ENCODE measurements at regions of chr12 and their contacts with region 1.

Region 1: DNA sequence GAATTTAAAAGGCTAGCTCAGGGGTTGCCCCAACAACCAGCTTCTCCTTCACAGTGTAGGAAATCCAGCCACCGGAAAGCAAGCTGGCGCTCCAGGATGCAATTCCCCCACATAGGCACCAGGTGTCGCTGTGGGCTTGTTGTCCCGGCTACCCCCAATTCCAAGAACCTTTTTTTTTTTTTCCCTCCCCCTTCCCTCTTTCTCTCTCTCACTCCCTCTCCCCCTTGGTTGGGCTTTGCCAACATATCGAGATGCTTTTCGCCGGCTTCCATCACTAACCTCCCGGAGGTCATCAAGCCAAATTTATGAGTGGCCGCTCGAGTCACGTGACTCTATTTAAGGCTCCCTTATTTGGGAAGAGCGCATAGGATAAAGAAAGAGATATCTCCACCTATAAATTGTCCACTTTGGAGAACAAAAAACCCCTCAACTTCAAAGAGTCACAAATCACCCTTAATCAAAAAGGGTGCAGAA is at the start of gene HOXC5:
- DNase-seq: peak; percentile 69
- H3K4me3 Mint-ChIP-seq: peak within 1 kb of the TSS; percentile 16
- H3K27ac Mint-ChIP-seq: no peak within 1 kb of the TSS
- H3K4me1 Mint-ChIP-seq: peaks cover 26% of the 10 kb centered on the region
- H3K27me3 Mint-ChIP-seq: peaks cover 85% of the 10 kb centered on the region
- total RNA-seq, gene HOXC5: not detected

Region 2: GRCh38 chr12:54005853-54006686 is 26.6 kb before region 1 on chr12:
- CTCF ChIA-PET with region 1: interaction called, 12 read pairs
- POLR2A ChIA-PET with region 1: interaction called, 4 read pairs
- DNase-seq: peak; percentile 85
- H3K4me3 Mint-ChIP-seq: peak overlapping the region; percentile 66
- H3K27ac Mint-ChIP-seq: no peak overlapping the region
- H3K4me1 Mint-ChIP-seq: peaks cover 25% of the 10 kb centered on the region
- H3K27me3 Mint-ChIP-seq: peaks cover 95% of the 10 kb centered on the region

Region 3: DNA sequence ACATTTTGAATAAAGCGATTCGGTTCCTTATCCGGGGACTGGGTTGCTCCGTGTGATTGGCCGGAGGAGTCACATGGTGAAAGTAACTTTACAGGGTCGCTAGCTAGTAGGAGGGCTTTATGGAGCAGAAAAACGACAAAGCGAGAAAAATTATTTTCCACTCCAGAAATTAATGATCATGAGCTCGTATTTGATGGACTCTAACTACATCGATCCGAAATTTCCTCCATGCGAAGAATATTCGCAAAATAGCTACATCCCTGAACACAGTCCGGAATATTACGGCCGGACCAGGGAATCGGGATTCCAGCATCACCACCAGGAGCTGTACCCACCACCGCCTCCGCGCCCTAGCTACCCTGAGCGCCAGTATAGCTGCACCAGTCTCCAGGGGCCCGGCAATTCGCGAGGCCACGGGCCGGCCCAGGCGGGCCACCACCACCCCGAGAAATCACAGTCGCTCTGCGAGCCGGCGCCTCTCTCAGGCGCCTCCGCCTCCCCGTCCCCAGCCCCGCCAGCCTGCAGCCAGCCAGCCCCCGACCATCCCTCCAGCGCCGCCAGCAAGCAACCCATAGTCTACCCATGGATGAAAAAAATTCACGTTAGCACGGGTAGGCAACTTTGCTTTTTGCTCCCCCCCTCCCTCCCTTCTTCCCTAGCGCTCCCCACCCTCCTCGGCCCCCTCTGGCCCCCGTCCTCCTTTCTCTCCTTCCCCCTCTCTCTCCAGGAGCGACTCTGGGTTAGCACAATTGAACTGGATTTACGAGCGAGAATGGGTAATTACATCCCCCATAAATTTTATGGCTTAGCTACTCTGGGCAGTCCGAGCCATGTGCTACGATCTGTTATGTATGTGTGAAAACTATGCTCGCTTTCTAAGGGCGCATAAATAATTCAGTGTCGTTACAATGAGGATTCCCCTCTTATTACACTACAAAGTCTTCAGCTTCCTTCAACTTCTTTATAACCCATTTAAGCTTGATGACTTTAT is 21.4 kb after region 1 on chr12 and contains the start of gene HOXC4:
- CTCF ChIA-PET with region 1: interaction called, 18 read pairs
- POLR2A ChIA-PET with region 1: interaction called, 4 read pairs
- DNase-seq: no peak
- H3K4me3 Mint-ChIP-seq: peak within 1 kb of the TSS; percentile 56
- H3K27ac Mint-ChIP-seq: no peak within 1 kb of the TSS
- H3K4me1 Mint-ChIP-seq: peaks cover 21% of the 10 kb centered on the region
- H3K27me3 Mint-ChIP-seq: peaks cover 91% of the 10 kb centered on the region
- total RNA-seq, gene HOXC4: 0.15 to 0.23 TPM

Region 4: GRCh38 chr12:54201001-54201794 is 168.5 kb after region 1 on chr12:
- CTCF ChIA-PET with region 1: interaction called, 107 read pairs
- POLR2A ChIA-PET with region 1: interaction called, 3 read pairs
- DNase-seq: peak; percentile 69
- H3K4me3 Mint-ChIP-seq: no peak overlapping the region
- H3K27ac Mint-ChIP-seq: no peak overlapping the region
- H3K4me1 Mint-ChIP-seq: peaks cover 4% of the 10 kb centered on the region
- H3K27me3 Mint-ChIP-seq: peaks cover 55% of the 10 kb centered on the region

Region 5: GRCh38 chr12:54214553-54215406 is 182.1 kb after region 1 on chr12:
- CTCF ChIA-PET with region 1: interaction called, 12 read pairs
- POLR2A ChIA-PET with region 1: no interaction called
- DNase-seq: peak; percentile 93
- H3K4me3 Mint-ChIP-seq: peak overlapping the region; percentile 85
- H3K27ac Mint-ChIP-seq: peak overlapping the region; percentile 68
- H3K4me1 Mint-ChIP-seq: peaks cover 47% of the 10 kb centered on the region
- H3K27me3 Mint-ChIP-seq: peaks cover 22% of the 10 kb centered on the region

Measured in activated CD4-positive, alpha-beta memory T cell treated with anti-CD3 and anti-CD28 coated beads, Interleukin-2, amount 10 ng/mL, durations not matched to agents 7 days and 5 days (primary cell).